ENCODE measurements at regions of chr18 and their contacts with region 1.

Region 1: GRCh38 chr18:50194631-50195532 is at the start of gene MYO5B:
- DNase-seq: peak; percentile 81
- ATAC-seq: peak; percentile 79
- H3K4me3 Mint-ChIP-seq: peak within 1 kb of the TSS; percentile 42
- H3K27ac Mint-ChIP-seq: no peak within 1 kb of the TSS
- H3K4me1 Mint-ChIP-seq: peaks cover 12% of the 10 kb centered on the region
- H3K27me3 Mint-ChIP-seq: peaks cover 60% of the 10 kb centered on the region
- total RNA-seq, gene MYO5B: 0.18 to 0.23 TPM

Region 2: GRCh38 chr18:49459404-49460171 is 735.3 kb before region 1 on chr18:
- CTCF ChIA-PET with region 1: no interaction called
- POLR2A ChIA-PET with region 1: no interaction called
- intact Hi-C with region 1: no loop called
- DNase-seq: peak; percentile 59
- ATAC-seq: peak; percentile 43
- H3K4me3 Mint-ChIP-seq: peak overlapping the region; percentile 82
- H3K27ac Mint-ChIP-seq: peak overlapping the region; percentile 69
- H3K4me1 Mint-ChIP-seq: peaks cover 36% of the 10 kb centered on the region
- H3K27me3 Mint-ChIP-seq: no peaks in the 10 kb centered on the region

Region 3: DNA sequence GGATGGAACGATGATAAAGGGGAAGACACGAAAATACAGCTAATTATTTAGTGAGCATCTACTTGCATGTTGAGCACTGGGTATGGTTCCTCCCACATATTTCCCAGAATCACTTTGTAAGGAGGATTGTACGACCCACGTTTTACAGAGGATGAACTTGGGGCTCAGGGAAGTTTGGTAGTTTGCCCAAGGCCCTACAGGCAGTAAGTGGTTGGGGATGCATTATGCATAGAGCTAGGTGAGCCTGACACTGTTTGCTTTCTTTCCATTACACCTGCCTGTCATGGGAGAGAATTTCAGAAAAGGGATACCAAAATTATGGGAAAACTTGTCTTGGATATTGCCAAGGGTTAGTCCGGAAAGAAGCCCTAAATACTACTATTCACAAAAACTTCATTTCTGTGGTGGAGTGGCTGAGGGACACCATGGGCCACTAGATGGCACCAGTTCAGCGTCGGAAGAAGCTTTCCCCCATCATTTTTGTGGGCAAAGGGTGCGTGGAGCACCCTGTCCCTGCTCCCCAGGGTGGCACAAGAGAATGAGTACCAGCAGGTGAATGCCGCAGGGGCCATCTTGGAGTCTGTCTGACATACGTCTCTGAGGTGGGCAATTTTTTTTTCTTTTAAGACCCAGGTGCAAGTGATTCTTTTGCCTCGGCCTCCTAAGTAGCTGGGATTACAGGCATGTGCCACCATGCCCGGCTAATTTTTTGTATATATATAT is 684.3 kb before region 1 on chr18:
- CTCF ChIA-PET with region 1: no interaction called
- POLR2A ChIA-PET with region 1: no interaction called
- intact Hi-C with region 1: loop called (anchors 10 kb)
- DNase-seq: peak; percentile 70
- ATAC-seq: peak; percentile 61
- H3K4me3 Mint-ChIP-seq: no peak overlapping the region
- H3K27ac Mint-ChIP-seq: no peak overlapping the region
- H3K4me1 Mint-ChIP-seq: no peaks in the 10 kb centered on the region
- H3K27me3 Mint-ChIP-seq: peaks cover 10% of the 10 kb centered on the region

Region 4: DNA sequence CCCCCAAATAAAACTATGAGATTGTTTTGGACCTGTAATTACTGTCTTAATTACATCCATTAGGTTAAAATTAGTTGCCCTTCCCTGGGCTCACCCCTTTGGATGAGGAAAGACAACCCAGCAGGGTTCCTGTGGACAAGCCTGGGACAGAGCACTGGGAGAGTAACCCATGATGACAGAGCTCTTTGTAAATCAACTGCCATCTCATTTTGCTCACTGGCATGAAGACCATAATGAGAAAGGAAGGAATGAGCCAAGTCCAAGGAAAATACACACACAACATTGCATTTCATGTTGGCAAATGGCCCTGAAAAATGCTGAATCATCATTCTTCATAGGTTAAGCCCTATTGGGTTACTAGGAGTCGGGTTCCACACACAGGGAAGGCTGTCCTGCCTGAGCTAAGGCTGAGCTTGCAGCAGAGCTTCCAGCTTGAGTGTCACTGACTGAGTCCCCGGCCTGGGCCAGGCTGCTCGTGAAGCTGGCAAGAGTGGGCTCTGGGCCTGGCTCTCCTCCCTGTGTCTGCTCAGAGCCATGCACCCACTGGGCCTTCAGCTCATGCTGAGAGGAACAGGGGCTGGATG is 287.4 kb before region 1 on chr18:
- CTCF ChIA-PET with region 1: no interaction called
- POLR2A ChIA-PET with region 1: no interaction called
- intact Hi-C with region 1: no loop called
- DNase-seq: no peak
- ATAC-seq: no peak
- H3K4me3 Mint-ChIP-seq: no peak overlapping the region
- H3K27ac Mint-ChIP-seq: no peak overlapping the region
- H3K4me1 Mint-ChIP-seq: peaks cover 4% of the 10 kb centered on the region
- H3K27me3 Mint-ChIP-seq: peaks cover 3% of the 10 kb centered on the region

Region 5: GRCh38 chr18:49944663-49945062 is 250.2 kb before region 1 on chr18:
- CTCF ChIA-PET with region 1: no interaction called
- POLR2A ChIA-PET with region 1: no interaction called
- intact Hi-C with region 1: loop called in 1 of 2 experiments (anchors 10 kb)
- DNase-seq: peak; percentile 35
- ATAC-seq: peak; percentile 53
- H3K4me3 Mint-ChIP-seq: no peak overlapping the region
- H3K27ac Mint-ChIP-seq: no peak overlapping the region
- H3K4me1 Mint-ChIP-seq: peaks cover 10% of the 10 kb centered on the region
- H3K27me3 Mint-ChIP-seq: peaks cover 2% of the 10 kb centered on the region

Region 6: GRCh38 chr18:50009773-50010335 is 185.0 kb before region 1 on chr18:
- CTCF ChIA-PET with region 1: interaction called, 3 read pairs
- POLR2A ChIA-PET with region 1: no interaction called
- intact Hi-C with region 1: loop called (anchors 1 to 5 kb)
- DNase-seq: peak; percentile 67
- ATAC-seq: peak; percentile 95
- H3K4me3 Mint-ChIP-seq: no peak overlapping the region
- H3K27ac Mint-ChIP-seq: no peak overlapping the region
- H3K4me1 Mint-ChIP-seq: no peaks in the 10 kb centered on the region
- H3K27me3 Mint-ChIP-seq: peaks cover 3% of the 10 kb centered on the region

Region 7: GRCh38 chr18:50024466-50024865 is 170.4 kb before region 1 on chr18:
- CTCF ChIA-PET with region 1: no interaction called
- POLR2A ChIA-PET with region 1: no interaction called
- intact Hi-C with region 1: no loop called
- DNase-seq: no peak
- ATAC-seq: no peak
- H3K4me3 Mint-ChIP-seq: no peak overlapping the region
- H3K27ac Mint-ChIP-seq: no peak overlapping the region
- H3K4me1 Mint-ChIP-seq: no peaks in the 10 kb centered on the region
- H3K27me3 Mint-ChIP-seq: peaks cover 28% of the 10 kb centered on the region

Region 8: DNA sequence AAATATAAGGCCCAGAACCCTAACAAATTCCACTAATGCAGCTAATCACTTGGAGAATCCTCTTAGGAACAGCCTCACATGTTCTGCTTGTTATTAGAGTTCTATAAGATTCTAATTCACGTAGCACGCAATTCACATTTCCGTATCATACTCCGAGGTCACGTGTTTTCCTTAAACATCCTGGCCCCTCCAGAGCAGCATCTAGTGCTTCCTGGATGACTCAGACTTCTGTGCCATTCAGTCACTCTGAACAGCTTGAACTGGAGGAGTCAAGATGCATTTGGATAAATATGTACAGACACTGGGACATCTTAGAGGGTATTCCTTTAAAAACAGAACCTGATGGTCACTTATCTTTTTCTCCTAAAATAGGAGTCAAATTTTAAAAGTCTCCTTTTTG is 156.4 kb before region 1 on chr18:
- CTCF ChIA-PET with region 1: interaction called, 4 read pairs
- POLR2A ChIA-PET with region 1: no interaction called
- intact Hi-C with region 1: loop called in 1 of 2 experiments (anchors 10 kb)
- DNase-seq: peak; percentile 10
- ATAC-seq: peak; percentile 81
- H3K4me3 Mint-ChIP-seq: no peak overlapping the region
- H3K27ac Mint-ChIP-seq: no peak overlapping the region
- H3K4me1 Mint-ChIP-seq: no peaks in the 10 kb centered on the region
- H3K27me3 Mint-ChIP-seq: peaks cover 9% of the 10 kb centered on the region

Region 9: GRCh38 chr18:50111265-50111792 is 83.6 kb before region 1 on chr18:
- CTCF ChIA-PET with region 1: no interaction called
- POLR2A ChIA-PET with region 1: no interaction called
- intact Hi-C with region 1: loop called in 1 of 2 experiments (anchors 5 kb)
- DNase-seq: no peak
- ATAC-seq: no peak
- H3K4me3 Mint-ChIP-seq: no peak overlapping the region
- H3K27ac Mint-ChIP-seq: no peak overlapping the region
- H3K4me1 Mint-ChIP-seq: no peaks in the 10 kb centered on the region
- H3K27me3 Mint-ChIP-seq: peaks cover 14% of the 10 kb centered on the region

Region 10: DNA sequence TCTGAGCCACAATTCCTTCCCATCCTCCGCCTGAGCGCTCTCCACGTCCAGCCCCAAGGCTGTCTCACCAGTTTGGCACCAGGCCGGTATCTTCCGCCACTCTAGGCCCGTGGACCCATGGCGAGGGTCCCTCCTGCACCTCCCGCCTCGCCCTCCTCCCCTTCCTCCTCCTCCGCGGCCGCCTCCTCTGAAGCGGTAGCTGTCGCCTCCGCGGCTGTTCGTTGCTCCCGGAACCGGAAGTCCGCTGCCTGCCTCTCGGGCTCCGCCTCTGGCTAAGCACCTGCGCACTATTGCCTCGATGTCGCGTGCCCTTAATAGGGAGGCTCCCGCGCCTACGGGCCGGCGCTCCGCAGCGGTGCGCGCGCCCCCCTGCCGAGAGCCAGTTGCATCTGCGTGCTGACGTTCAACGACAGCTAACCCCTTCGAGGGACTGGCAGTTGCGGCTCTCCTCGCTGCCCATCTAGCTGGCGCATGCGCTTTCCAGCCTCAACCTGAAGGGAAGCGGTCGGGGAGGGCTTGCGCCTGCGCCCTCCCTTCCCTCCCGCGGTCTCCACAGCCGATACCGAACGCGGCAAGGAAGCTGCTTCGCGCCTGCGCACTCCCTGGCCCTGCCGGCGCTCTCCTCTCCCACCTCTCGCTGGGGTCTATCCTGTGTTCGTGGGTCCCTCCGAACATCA is 86.6 kb after region 1 on chr18 and contains the start of gene MBD1:
- CTCF ChIA-PET with region 1: no interaction called
- POLR2A ChIA-PET with region 1: no interaction called
- intact Hi-C with region 1: no loop called
- DNase-seq: peak; percentile 97
- ATAC-seq: peak; percentile 91
- H3K4me3 Mint-ChIP-seq: peak within 1 kb of the TSS; percentile 91
- H3K27ac Mint-ChIP-seq: peak within 1 kb of the TSS; percentile 79
- H3K4me1 Mint-ChIP-seq: peaks cover 35% of the 10 kb centered on the region
- H3K27me3 Mint-ChIP-seq: no peaks in the 10 kb centered on the region
- total RNA-seq, gene MBD1: 62.2 to 70.5 TPM